ENCODE measurements at regions of chr15 and their contacts with region 1.

Region 1: GRCh38 chr15:35289024-35289617 is 204.0 kb upstream of the NANOGP8 start:
- DNase-seq: no peak
- H3K4me3 Mint-ChIP-seq: no peak overlapping the region
- H3K27ac Mint-ChIP-seq: no peak overlapping the region
- H3K4me1 Mint-ChIP-seq: no peaks in the 10 kb centered on the region
- H3K27me3 Mint-ChIP-seq: peaks cover 2% of the 10 kb centered on the region

Region 2: GRCh38 chr15:34969340-34970097 is 319.6 kb before region 1 on chr15 and contains the start of gene AQR:
- intact Hi-C with region 1: no loop called
- DNase-seq: peak; percentile 89
- H3K4me3 Mint-ChIP-seq: peak within 1 kb of the TSS; percentile 98
- H3K27ac Mint-ChIP-seq: peak within 1 kb of the TSS; percentile 95
- H3K4me1 Mint-ChIP-seq: peaks cover 44% of the 10 kb centered on the region
- H3K27me3 Mint-ChIP-seq: no peaks in the 10 kb centered on the region
- total RNA-seq, gene AQR: 43.2 and 44.4 TPM in 2 replicates

Region 3: GRCh38 chr15:35444557-35445204 is 155.6 kb after region 1 on chr15:
- intact Hi-C with region 1: loop called (anchors 1 kb)
- DNase-seq: no peak
- H3K4me3 Mint-ChIP-seq: no peak overlapping the region
- H3K27ac Mint-ChIP-seq: no peak overlapping the region
- H3K4me1 Mint-ChIP-seq: no peaks in the 10 kb centered on the region
- H3K27me3 Mint-ChIP-seq: no peaks in the 10 kb centered on the region

Measured in activated T-helper 1 cell treated with anti-CD3 and anti-CD28 coated beads, Interleukin-12 subunit alpha, Interleukin-12 subunit beta, Interleukin-2, Interleukin-4 antibody, amounts not matched to agents 30 ng/mL and 10 ng/mL and 1 ng/mL, durations not matched to agents 14 hours and 24 hours and 36 hours (primary cell).